ENCODE measurements at regions of chr1 and their contacts with region 1.

Region 1: GRCh38 chr1:34162852-34163766 is 1.9 kb downstream of the CSMD2 start:
- DNase-seq: peak; percentile 89
- H3K4me3 ChIP-seq: peak overlapping the region; percentile 24 to 53
- H3K27ac ChIP-seq: no peak overlapping the region
- H3K4me1 ChIP-seq: peaks cover 0 to 15% of the 10 kb centered on the region in 2 experiments; a peak in 1 of 4 replicates
- H3K27me3 ChIP-seq: no peaks in the 10 kb centered on the region
- CTCF ChIP-seq: peak; percentile 55
- EP300 ChIP-seq: no peak
- RAD21 ChIP-seq: peak; percentile 88

Region 2: GRCh38 chr1:33725037-33725436 is 438.1 kb before region 1 on chr1:
- CTCF ChIA-PET with region 1: interaction called, 10 read pairs
- POLR2A ChIA-PET with region 1: no interaction called
- DNase-seq: no peak
- H3K4me3 ChIP-seq: no peak overlapping the region
- H3K27ac ChIP-seq: no peak overlapping the region
- H3K4me1 ChIP-seq: no peaks in the 10 kb centered on the region; a peak in 1 of 4 replicates
- H3K27me3 ChIP-seq: no peaks in the 10 kb centered on the region
- CTCF ChIP-seq: no peak
- EP300 ChIP-seq: no peak
- RAD21 ChIP-seq: no peak

Region 3: GRCh38 chr1:33818071-33818470 is 345.0 kb before region 1 on chr1:
- CTCF ChIA-PET with region 1: interaction called, 11 read pairs
- POLR2A ChIA-PET with region 1: interaction called, 3 read pairs
- DNase-seq: no peak
- H3K4me3 ChIP-seq: no peak overlapping the region
- H3K27ac ChIP-seq: no peak overlapping the region
- H3K4me1 ChIP-seq: peaks cover 0 to 20% of the 10 kb centered on the region in 2 experiments; a peak in 1 of 4 replicates
- H3K27me3 ChIP-seq: no peaks in the 10 kb centered on the region
- CTCF ChIP-seq: no peak
- EP300 ChIP-seq: no peak
- RAD21 ChIP-seq: no peak

Region 4: DNA sequence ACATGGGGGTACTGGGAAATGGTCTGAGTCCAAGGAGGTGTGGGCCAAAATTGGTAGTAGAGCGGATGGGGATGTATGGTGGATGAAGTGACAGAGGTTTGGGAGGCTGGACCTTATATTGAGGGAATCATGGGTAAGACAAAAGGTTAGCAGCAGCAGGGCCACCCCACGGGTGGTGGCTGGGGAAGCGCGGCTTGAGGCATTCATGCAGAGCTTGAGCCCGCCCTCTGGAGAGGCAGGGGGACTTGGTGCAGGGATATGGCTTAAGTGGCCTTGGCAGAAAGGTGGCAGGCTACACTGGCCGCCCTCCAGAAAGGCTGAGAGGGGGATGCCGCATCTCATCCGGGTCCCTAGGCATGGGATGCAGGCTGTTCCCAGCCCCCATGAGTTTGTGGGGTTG is 267.7 kb before region 1 on chr1:
- CTCF ChIA-PET with region 1: no interaction called
- POLR2A ChIA-PET with region 1: no interaction called
- DNase-seq: no peak
- H3K4me3 ChIP-seq: no peak overlapping the region
- H3K27ac ChIP-seq: no peak overlapping the region
- H3K4me1 ChIP-seq: peaks cover 0 to 10% of the 10 kb centered on the region in 2 experiments; a peak in 1 of 4 replicates
- H3K27me3 ChIP-seq: no peaks in the 10 kb centered on the region
- CTCF ChIP-seq: no peak
- EP300 ChIP-seq: no peak
- RAD21 ChIP-seq: no peak

Region 5: DNA sequence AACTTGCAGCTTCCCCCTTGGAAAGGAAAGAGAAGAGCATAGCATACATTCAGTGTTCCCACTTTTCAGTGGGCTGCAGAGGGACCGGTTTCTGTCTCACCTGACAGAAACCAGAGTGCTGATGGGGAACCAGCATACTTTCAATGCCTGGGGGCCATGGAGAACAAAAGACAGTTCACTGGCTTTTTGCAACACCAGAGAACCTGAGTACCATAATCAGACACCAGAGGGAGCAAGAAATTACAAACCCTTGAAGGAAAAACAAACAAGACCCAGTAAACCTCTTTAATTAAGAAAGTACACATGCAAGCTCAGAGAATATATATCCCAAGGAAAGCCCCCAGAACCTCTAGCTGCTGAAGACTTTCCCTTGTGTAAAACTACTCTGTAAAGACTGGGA is 49.2 kb before region 1 on chr1:
- CTCF ChIA-PET with region 1: interaction called, 28 read pairs
- POLR2A ChIA-PET with region 1: no interaction called
- DNase-seq: peak; percentile 30
- H3K4me3 ChIP-seq: no peak overlapping the region
- H3K27ac ChIP-seq: no peak overlapping the region
- H3K4me1 ChIP-seq: no peaks in the 10 kb centered on the region
- H3K27me3 ChIP-seq: no peaks in the 10 kb centered on the region
- CTCF ChIP-seq: no peak
- EP300 ChIP-seq: no peak
- RAD21 ChIP-seq: peak; percentile 45; the same call in 1 of the 2 replicates

Region 6: DNA sequence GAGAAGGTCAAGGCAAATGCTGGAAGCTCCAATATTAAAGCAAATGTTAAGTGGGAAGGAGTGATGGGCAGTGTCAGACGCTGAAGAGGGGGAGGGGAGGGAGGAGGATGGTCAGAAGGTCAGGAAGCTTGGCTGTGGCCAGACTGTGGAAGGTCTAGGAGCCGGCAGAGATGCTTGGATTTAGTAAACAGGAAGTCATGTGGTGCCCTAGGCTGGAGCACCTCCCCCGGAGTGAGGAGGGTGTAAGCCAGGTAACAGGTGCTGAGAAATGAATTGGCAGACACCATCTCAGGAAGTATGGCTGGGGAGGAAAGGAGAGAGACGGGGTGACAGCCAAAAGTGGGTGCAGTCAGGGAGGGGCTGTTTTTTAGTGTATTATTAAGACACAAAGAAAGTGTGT is 15.8 kb before region 1 on chr1:
- CTCF ChIA-PET with region 1: interaction called, 35 read pairs
- POLR2A ChIA-PET with region 1: no interaction called
- DNase-seq: no peak
- H3K4me3 ChIP-seq: no peak overlapping the region
- H3K27ac ChIP-seq: no peak overlapping the region
- H3K4me1 ChIP-seq: no peaks in the 10 kb centered on the region
- H3K27me3 ChIP-seq: no peaks in the 10 kb centered on the region
- CTCF ChIP-seq: no peak
- EP300 ChIP-seq: no peak
- RAD21 ChIP-seq: no peak

Region 7: DNA sequence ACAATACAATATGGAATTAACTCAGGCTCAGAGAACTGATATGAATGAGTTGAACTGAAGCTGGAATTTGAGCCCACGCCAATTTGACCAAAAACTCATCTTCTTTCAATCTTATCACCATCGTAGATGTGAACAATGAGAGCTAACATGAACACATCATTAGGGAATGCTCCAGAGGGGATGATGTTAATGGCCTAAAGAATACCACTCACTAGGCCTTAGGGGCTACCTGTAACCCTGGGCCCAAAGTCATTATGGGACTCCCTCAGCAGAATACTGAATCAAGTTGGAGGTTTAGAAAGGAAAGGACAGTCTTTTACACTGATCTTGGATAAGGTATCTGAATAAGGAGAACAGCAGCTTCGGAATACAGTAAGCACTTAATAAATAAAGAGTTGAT is 87.2 kb after region 1 on chr1:
- CTCF ChIA-PET with region 1: no interaction called
- POLR2A ChIA-PET with region 1: no interaction called
- DNase-seq: no peak
- H3K4me3 ChIP-seq: no peak overlapping the region
- H3K27ac ChIP-seq: no peak overlapping the region
- H3K4me1 ChIP-seq: no peaks in the 10 kb centered on the region
- H3K27me3 ChIP-seq: no peaks in the 10 kb centered on the region
- CTCF ChIP-seq: no peak
- EP300 ChIP-seq: no peak
- RAD21 ChIP-seq: no peak

Region 8: GRCh38 chr1:34292472-34292871 is 129.4 kb after region 1 on chr1:
- CTCF ChIA-PET with region 1: no interaction called
- POLR2A ChIA-PET with region 1: no interaction called
- DNase-seq: no peak
- H3K4me3 ChIP-seq: no peak overlapping the region
- H3K27ac ChIP-seq: no peak overlapping the region
- H3K4me1 ChIP-seq: no peaks in the 10 kb centered on the region
- H3K27me3 ChIP-seq: no peaks in the 10 kb centered on the region
- CTCF ChIP-seq: no peak
- EP300 ChIP-seq: no peak
- RAD21 ChIP-seq: peak; percentile 24; the same call in 1 of the 2 replicates

Region 9: DNA sequence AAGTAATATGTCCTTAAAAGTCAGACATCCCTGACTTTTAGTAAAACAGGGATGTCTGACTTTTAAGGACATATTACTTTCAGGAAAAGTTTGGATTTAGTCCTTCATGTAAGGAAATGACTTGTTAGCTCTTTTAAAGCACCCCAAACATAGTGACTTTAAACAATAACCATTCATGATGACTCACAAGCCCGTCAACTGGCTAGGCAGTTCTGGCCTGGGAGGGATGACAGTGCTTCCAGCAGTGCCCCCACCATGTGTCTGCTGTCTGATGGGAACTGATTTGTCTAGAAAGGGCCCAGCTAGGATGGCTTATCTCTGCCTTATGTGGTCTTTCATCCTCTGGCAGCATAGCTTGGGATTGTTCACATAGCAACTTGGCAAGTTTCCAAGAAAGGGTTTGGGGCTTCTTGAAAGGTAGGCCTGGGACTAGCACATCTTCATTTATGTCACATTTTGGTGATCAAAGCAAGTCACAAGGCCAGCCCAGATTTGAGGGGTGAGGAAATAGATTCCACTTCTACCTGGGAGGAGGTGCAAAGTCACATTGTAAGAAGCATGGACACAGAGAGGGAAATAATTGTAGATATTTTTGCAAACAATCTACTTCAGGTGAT is 157.1 kb after region 1 on chr1:
- CTCF ChIA-PET with region 1: no interaction called
- POLR2A ChIA-PET with region 1: no interaction called
- DNase-seq: peak; percentile 23
- H3K4me3 ChIP-seq: no peak overlapping the region
- H3K27ac ChIP-seq: no peak overlapping the region
- H3K4me1 ChIP-seq: no peaks in the 10 kb centered on the region; a peak in 1 of 4 replicates
- H3K27me3 ChIP-seq: no peaks in the 10 kb centered on the region
- CTCF ChIP-seq: no peak
- EP300 ChIP-seq: no peak
- RAD21 ChIP-seq: no peak

Region 10: GRCh38 chr1:34597877-34598514 is 434.9 kb after region 1 on chr1:
- CTCF ChIA-PET with region 1: interaction called, 32 read pairs
- POLR2A ChIA-PET with region 1: no interaction called
- DNase-seq: peak; percentile 75
- H3K4me3 ChIP-seq: peak overlapping the region in 1 of 2 experiments; percentile 52; a peak in 1 of 4 replicates
- H3K27ac ChIP-seq: no peak overlapping the region
- H3K4me1 ChIP-seq: no peaks in the 10 kb centered on the region
- H3K27me3 ChIP-seq: no peaks in the 10 kb centered on the region
- CTCF ChIP-seq: peak; percentile 32
- EP300 ChIP-seq: no peak
- RAD21 ChIP-seq: peak; percentile 91

Measured in SK-N-SH (cell line).